ENCODE measurements at regions of chr12 and their contacts with region 1.

Region 1: DNA sequence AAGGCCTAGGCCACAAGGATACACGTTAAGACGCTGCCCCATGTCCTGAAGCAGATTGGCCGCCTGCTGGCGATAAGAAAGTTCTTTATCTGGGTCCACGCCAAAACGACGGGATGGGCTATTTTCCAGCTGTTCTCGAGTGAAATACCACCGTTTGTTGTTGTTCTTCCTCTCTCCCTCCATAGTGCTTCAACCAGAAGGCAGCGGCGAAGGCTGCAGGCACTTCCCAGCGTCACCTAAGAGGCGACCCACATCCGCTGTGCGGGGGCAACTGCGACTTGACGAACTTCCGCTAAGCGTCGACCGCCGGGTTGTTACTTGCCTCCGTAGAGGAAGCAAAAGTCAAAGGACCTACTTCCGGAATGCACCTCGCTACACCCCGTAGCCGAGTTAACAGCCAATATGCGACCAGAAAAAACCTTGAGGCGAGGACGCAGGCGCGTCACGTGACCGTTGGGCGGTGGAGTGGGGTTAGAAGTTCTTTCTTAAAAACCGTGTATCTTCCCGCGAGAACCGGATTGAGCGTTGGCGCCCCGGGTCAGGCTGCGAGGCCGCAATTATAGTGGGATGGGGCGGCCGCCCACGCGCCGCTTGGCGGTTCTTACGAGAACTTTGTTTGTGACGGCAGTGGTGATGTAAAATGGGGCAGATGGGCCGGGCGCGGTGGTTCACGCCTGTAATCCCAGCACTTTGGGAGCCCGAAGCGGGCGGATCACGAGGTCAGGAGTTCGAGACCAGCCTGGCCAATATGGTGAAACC is at the start of gene CCNT1:
- DNase-seq: peak; percentile 100
- H3K4me3 Mint-ChIP-seq: peak within 1 kb of the TSS; percentile 98
- H3K27ac Mint-ChIP-seq: peak within 1 kb of the TSS; percentile 99
- H3K4me1 Mint-ChIP-seq: peaks cover 39% of the 10 kb centered on the region
- H3K27me3 Mint-ChIP-seq: no peaks in the 10 kb centered on the region
- total RNA-seq, gene CCNT1: 66.2 to 73.3 TPM

Region 2: DNA sequence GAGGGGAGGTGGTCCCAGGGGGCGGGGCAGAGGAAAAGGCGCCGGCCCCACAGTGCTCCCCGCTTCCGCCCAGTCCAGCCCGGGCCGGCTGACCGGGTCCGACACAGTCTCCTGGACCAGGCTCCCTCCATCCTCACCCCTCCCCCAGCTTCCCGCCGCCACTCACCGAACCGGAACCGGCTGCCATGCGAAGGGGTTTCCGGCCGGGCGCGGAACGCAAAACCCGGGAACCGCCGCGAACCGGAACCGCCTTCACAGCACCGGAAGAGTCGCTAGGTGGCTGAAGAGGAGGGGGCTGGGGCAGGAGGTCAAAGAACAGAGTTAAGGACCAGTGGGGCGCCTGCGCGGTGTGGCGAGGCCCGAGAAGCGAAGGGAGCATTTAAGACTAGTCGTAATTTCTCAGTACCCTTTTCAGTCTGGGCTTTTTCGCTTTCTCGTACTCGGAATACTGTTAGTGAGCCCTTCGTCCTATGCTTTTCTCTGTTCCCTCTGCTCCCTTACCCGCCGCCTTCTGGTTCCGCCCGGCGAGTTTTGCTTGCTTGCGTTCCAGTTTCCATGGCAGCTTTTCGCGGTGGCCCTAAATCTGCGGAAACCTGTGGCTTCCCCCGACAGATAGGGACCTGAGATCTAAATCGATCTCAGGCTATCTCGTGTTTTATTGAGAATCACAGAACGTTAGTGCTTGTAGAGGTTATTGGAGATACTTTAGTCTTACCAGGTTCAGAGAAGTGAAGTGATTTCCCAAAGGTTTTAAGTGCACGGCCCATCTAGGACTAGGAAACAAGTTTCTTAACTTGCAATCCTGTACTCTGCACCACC is 610.6 kb before region 1 on chr12 and contains the start of gene SENP1:
- CTCF ChIA-PET with region 1: no interaction called
- POLR2A ChIA-PET with region 1: no interaction called
- intact Hi-C with region 1: loop called (anchors 5 kb)
- DNase-seq: peak; percentile 94
- H3K4me3 Mint-ChIP-seq: peak within 1 kb of the TSS; percentile 86
- H3K27ac Mint-ChIP-seq: peak within 1 kb of the TSS; percentile 94
- H3K4me1 Mint-ChIP-seq: peaks cover 47% of the 10 kb centered on the region
- H3K27me3 Mint-ChIP-seq: no peaks in the 10 kb centered on the region
- total RNA-seq, gene SENP1: 37.7 to 41.6 TPM

Region 3: DNA sequence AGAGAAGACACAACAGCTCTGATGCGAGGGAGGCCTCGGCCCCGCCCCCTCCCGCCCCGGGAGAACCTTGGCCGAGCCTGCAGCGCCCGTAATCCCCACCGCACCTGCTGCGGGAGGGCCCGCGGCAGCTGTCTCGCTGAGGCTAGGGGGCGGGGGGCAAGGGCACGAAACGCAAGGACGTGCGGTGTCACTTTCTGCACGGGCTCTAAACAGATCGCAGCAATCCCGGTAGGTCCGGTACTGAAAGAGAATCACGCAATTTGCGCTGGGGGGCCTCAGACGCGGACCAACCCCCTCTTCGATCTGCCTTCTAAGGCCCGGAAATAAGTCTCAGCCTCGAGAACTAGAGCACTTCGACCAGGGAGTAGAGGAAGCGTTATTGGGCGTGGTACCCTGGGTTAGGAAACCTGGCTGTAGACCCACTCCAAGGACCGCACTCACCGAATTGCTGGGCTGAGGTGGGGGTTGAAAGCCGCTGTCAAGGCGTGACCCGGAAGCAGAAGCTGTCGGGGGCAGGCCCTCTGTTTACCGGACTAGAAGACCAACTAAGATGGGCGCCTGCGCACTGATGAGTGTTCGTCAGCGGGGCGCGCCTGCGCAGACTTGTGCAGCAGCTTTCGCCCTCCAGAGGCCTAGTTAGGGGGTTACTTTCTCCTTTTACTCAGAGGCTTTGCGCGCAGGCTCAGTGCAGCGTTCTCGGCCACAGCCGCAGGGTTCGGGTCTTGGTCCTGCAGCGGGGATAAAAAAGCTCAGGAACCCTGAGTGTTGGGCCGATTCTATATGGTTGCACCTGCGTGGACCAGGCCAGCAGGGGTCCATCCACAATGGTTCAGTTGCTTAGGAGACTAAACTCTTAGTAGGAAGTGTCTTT is 559.4 kb before region 1 on chr12 and contains the start of gene ASB8:
- CTCF ChIA-PET with region 1: no interaction called
- POLR2A ChIA-PET with region 1: no interaction called
- intact Hi-C with region 1: loop called (anchors 2 kb)
- DNase-seq: peak; percentile 100
- H3K4me3 Mint-ChIP-seq: peak within 1 kb of the TSS; percentile 94
- H3K27ac Mint-ChIP-seq: peak within 1 kb of the TSS; percentile 96
- H3K4me1 Mint-ChIP-seq: peaks cover 37% of the 10 kb centered on the region
- H3K27me3 Mint-ChIP-seq: no peaks in the 10 kb centered on the region
- total RNA-seq, gene ASB8: 31.4 to 33.6 TPM

Region 4: DNA sequence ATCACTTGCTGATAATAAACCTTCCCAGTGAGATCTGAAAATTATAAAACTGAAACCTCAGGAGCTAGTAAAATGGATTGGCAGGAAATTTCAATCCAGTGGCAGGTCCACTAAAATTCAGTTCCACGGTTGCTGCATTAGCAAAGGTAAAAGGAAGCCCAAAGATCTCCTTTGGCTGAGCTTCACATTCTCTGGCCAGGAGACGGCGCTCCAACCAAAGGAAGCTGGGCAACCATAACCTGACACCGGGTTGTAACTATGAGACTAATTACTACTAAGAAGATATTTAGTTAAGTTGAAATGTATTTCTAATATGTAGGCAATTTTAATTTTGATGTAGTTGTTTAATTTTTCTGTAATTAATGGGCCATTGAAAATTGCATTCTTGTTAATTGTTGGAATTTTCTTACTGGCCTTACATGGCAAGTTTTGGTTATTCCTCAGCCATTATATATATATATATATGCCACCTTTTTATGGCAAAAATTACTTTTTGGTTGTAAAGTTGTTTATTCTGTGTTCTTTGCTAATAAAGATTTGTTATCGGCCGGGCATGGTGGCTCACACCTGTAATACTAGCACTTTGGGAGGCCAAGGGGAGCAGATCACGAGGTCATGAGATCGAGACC is 174.3 kb before region 1 on chr12:
- CTCF ChIA-PET with region 1: no interaction called
- POLR2A ChIA-PET with region 1: no interaction called
- intact Hi-C with region 1: loop called (anchors 1 kb)
- DNase-seq: peak; percentile 75
- H3K4me3 Mint-ChIP-seq: no peak overlapping the region
- H3K27ac Mint-ChIP-seq: no peak overlapping the region
- H3K4me1 Mint-ChIP-seq: peaks cover 11% of the 10 kb centered on the region
- H3K27me3 Mint-ChIP-seq: no peaks in the 10 kb centered on the region

Region 5: GRCh38 chr12:48681738-48682532 is 34.7 kb before region 1 on chr12 and contains the start of gene KANSL2:
- CTCF ChIA-PET with region 1: interaction called, 3 read pairs
- POLR2A ChIA-PET with region 1: interaction called, 8 read pairs
- intact Hi-C with region 1: loop called (anchors 1 kb)
- DNase-seq: peak; percentile 99
- H3K4me3 Mint-ChIP-seq: peak within 1 kb of the TSS; percentile 99
- H3K27ac Mint-ChIP-seq: peak within 1 kb of the TSS; percentile 94
- H3K4me1 Mint-ChIP-seq: peaks cover 41% of the 10 kb centered on the region
- H3K27me3 Mint-ChIP-seq: no peaks in the 10 kb centered on the region
- total RNA-seq, gene KANSL2: 45.7 to 48.4 TPM

Region 6: DNA sequence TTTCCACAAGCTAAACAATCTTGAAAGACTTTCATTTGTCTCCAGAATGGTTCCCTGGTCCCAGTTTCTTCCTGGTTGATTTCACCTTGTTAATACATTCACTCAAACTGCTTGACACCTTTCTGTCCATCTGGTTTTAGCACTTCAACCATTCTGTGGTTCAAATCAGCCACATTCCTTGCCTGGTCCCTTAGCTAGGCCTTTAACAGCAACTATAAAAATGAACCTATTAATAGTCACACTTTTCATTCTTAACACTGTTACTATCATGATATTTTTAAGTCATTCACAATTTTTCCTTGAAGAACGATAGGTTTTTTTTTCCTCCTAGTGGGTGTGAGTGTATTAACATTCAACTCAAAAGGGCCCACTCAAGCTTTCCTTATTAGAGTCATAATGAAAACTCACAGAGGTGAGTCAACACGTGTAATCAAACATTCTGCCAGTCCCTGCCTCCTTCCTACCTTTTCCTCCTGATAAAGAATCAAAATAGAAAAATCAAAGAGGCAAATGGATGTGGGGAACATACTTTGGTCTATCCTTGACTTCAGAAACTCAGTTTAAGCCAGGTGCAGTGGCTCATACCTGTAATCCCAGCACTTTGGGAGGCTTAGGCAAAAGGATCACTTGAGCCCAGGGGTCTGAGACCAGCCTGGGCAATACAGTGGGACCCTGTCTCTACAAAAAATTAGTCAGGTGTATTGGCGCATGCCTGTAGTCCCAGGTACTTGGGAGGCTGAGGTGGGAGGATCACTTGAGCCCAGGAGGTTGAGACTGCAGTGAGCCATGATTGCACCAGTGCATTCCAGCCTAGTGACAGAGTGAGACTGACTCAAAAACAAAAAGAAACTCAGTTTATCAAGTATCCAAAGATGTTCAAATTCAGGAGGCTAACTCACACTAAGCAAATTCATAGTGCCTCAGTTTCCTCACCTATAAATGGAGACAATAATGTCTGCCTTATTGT is 34.4 kb after region 1 on chr12:
- CTCF ChIA-PET with region 1: interaction called, 4 read pairs
- POLR2A ChIA-PET with region 1: no interaction called
- intact Hi-C with region 1: loop called (anchors 2 kb)
- DNase-seq: peak; percentile 27
- H3K4me3 Mint-ChIP-seq: no peak overlapping the region
- H3K27ac Mint-ChIP-seq: peak overlapping the region; percentile 76
- H3K4me1 Mint-ChIP-seq: peaks cover 20% of the 10 kb centered on the region
- H3K27me3 Mint-ChIP-seq: no peaks in the 10 kb centered on the region